Body of pancreas (tissue), 4 donors: ENCODE measurements at regions of chr17 and their contacts with region 1.

Region 1: GRCh38 chr17:59004338-59005111 is 102.2 kb downstream of the TRIM37 start:
- DNase-seq: peak; percentile 61 to 80 (median 71)
- ATAC-seq: peak; percentile 71
- H3K4me3 ChIP-seq: no peak overlapping the region
- H3K27ac ChIP-seq: no peak overlapping the region
- H3K4me1 ChIP-seq: peaks cover 20% of the 10 kb centered on the region
- H3K27me3 ChIP-seq: no peaks in the 10 kb centered on the region
- CTCF ChIP-seq: peak; percentile 78 to 95 (median 91)
- POLR2A ChIP-seq: no peak

Region 2: GRCh38 chr17:58520843-58521430 is 483.6 kb before region 1 on chr17:
- intact Hi-C with region 1: loop called (anchors 10 kb)
- DNase-seq: peak in 1 of 4 donors; percentile 12
- ATAC-seq: no peak
- H3K4me3 ChIP-seq: no peak overlapping the region
- H3K27ac ChIP-seq: no peak overlapping the region
- H3K4me1 ChIP-seq: peaks cover 13% of the 10 kb centered on the region
- H3K27me3 ChIP-seq: no peaks in the 10 kb centered on the region
- CTCF ChIP-seq: peak in 1 of 7 experiments; percentile 9
- POLR2A ChIP-seq: no peak

Region 3: GRCh38 chr17:58587702-58588254 is 416.7 kb before region 1 on chr17:
- intact Hi-C with region 1: loop called (anchors 5 kb)
- DNase-seq: peak; percentile 54 to 65 (median 60)
- ATAC-seq: peak; percentile 82
- H3K4me3 ChIP-seq: no peak overlapping the region
- H3K27ac ChIP-seq: no peak overlapping the region
- H3K4me1 ChIP-seq: no peaks in the 10 kb centered on the region
- H3K27me3 ChIP-seq: no peaks in the 10 kb centered on the region
- CTCF ChIP-seq: peak; percentile 71 to 92 (median 86)
- POLR2A ChIP-seq: no peak

Region 4: DNA sequence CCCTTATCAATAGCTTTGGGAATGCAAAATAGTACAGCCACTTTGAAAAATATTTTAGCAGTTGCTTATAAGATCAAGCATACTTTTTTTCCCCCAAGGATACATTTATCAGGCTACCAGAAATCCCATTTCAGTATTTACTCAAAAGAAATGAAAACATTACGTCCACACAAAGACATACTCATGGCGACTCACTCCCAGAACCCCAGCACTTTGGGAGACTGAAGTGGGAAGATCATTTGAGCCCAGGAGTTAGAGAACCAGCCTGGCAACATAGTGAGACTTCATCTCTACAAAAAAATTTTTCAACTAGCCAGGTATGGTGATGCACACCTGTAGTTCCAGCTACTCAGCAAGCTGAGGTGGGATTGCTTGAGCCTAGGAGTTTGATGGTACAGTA is 144.5 kb after region 1 on chr17:
- intact Hi-C with region 1: no loop called
- DNase-seq: no peak
- ATAC-seq: no peak
- H3K4me3 ChIP-seq: no peak overlapping the region
- H3K27ac ChIP-seq: no peak overlapping the region
- H3K4me1 ChIP-seq: peaks cover 8% of the 10 kb centered on the region
- H3K27me3 ChIP-seq: no peaks in the 10 kb centered on the region
- CTCF ChIP-seq: no peak
- POLR2A ChIP-seq: no peak